K562 (cell line): ENCODE measurements at regions of chr6 and their contacts with region 1.

Region 1: DNA sequence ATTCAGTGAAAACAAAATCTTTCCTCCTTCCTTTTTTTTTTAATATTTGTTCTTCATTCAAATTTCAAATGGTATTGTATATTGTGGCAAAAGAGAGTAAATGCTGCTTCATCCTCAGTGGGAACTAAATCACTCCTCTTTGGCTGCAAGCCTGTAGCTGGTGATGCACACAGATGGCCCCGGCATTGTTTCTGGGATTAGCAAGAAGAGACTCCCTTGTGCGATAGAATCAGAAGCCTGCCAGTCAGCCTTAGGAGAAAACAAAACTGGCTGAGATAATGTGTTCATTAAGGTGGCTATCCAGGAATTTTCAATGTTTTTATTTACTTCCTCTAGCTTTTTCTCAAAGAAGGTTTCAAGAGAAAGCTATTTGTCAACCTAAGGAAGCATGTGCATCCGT is 20.7 kb upstream of the ELOVL2 start:
- DNase-seq: no peak
- ATAC-seq: no peak
- H3K4me3 ChIP-seq: no peak overlapping the region
- H3K27ac ChIP-seq: no peak overlapping the region
- H3K4me1 ChIP-seq: peaks cover 3% of the 10 kb centered on the region in 2 experiments; a peak in 3 of 5 replicates
- H3K27me3 ChIP-seq: peaks cover 0 to 2% of the 10 kb centered on the region in 2 experiments; a peak in 1 of 5 replicates
- CTCF ChIP-seq: no peak
- EP300 ChIP-seq: no peak
- POLR2A ChIP-seq: no peak
- RAD21 ChIP-seq: no peak

Region 2: DNA sequence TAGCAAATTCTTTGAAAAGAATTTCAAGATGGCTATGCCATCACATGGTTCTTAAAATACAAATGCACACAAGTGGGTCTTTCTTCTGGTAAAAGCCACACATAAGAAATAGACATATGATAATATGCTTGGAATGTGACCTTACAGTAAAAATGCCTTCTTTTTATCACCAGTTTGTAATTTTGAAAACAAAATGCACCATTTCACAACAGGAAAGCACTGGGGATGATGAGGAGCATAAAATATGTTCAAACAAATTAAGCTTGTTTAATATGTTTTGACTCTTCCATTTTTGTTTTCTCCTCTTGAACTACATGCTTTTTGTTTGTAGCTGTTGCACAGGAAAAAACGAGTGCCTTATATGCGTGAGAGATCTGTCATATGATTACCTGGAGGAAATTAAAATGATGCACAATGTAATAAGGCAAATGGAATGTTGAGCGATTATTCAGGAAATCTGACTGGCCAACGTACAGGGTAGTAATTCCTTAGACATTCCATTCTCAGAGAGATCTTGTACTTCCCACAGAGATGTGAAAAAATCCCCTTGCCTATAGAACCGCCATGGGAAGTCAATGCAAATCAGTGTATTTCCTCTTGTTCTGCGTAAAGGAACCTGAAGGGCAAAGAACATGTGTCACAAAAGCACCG is 1561.6 kb before region 1 on chr6:
- CTCF ChIA-PET with region 1: no interaction called
- POLR2A ChIA-PET with region 1: no interaction called
- in situ Hi-C with region 1: no loop called
- intact Hi-C with region 1: no loop called
- DNase-seq: no peak
- ATAC-seq: no peak
- H3K4me3 ChIP-seq: no peak overlapping the region
- H3K27ac ChIP-seq: no peak overlapping the region
- H3K4me1 ChIP-seq: no peaks in the 10 kb centered on the region
- H3K27me3 ChIP-seq: no peaks in the 10 kb centered on the region
- CTCF ChIP-seq: no peak
- EP300 ChIP-seq: no peak
- POLR2A ChIP-seq: no peak
- RAD21 ChIP-seq: no peak

Region 3: DNA sequence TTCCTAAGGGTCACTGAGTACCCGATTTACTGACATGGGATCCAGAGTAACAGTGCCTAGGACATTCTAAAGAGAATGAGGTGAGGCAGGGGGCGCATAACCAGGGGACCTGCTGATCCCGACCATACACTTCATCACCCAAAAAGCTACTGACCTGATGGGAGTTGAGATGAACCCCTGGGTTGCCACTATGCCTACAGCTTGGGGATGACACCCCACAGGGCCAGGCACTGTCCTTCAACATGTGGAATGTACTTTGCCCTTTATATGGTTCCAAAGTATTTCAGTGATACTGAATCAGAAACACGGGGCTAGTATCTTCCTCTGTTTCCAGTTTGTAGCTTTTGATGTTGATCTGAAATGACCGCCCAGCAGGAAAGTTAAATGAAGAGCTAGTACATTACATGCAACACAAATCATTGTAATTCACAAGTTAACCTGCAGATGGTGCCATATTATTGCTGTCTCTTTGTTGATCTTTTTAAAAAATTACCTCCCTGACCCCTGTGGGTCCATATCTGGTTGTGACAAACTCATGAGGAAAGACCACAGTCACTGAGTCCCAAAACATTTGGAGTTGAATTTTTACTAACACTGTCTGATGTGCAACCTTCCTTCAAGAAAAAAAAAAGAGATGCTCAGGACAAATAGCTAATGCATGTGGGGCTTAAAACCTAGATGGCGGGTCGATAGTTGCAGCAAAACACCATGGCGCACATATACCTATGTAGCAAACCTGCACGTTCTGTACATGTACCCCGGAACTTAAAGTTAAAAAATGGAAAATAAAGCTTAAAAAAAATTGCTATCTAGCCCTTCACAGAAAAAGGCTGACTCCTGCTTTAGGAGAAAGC is 586.4 kb before region 1 on chr6:
- CTCF ChIA-PET with region 1: interaction called, 13 read pairs
- POLR2A ChIA-PET with region 1: interaction called, 3 read pairs
- in situ Hi-C with region 1: loop called (anchors 5 kb)
- intact Hi-C with region 1: loop called (anchors 1 kb)
- DNase-seq: peak; percentile 59 to 79 (median 68)
- ATAC-seq: peak; percentile 88
- H3K4me3 ChIP-seq: no peak overlapping the region
- H3K27ac ChIP-seq: no peak overlapping the region
- H3K4me1 ChIP-seq: peaks cover 0 to 6% of the 10 kb centered on the region in 2 experiments; a peak in 1 of 5 replicates
- H3K27me3 ChIP-seq: peaks cover 0 to 15% of the 10 kb centered on the region in 2 experiments; a peak in 2 of 5 replicates
- CTCF ChIP-seq: peak; percentile 57 to 86 (median 71); a peak in 5 of 6 replicates
- EP300 ChIP-seq: no peak
- POLR2A ChIP-seq: no peak
- RAD21 ChIP-seq: peak; percentile 82 to 92

Region 4: DNA sequence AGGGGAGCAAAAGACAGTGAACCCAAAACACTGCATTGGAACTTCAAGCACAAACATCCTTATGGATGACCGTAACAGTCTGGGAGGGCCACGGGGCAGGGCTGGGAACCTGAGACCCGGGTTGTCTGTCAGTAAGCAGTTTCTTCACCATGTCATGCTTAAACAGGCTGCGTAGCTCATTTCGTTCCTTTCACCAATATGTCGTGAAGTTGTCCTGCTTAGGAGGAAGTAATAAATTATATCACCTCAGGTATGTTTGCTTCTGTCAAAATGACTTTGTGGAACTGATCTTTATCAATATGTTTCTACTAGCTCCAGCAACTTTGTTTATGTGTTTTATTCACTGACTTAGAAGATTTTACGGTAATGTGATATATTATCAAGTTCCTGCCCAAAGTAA is 214.1 kb before region 1 on chr6:
- CTCF ChIA-PET with region 1: interaction called, 4 read pairs
- POLR2A ChIA-PET with region 1: no interaction called
- in situ Hi-C with region 1: no loop called
- intact Hi-C with region 1: loop called (anchors 2 kb)
- DNase-seq: peak in 2 of 4 experiments; percentile 51 to 57
- ATAC-seq: peak; percentile 86
- H3K4me3 ChIP-seq: no peak overlapping the region
- H3K27ac ChIP-seq: peak overlapping the region; percentile 53
- H3K4me1 ChIP-seq: peaks cover 8 to 11% of the 10 kb centered on the region in 2 experiments; a peak in 3 of 5 replicates
- H3K27me3 ChIP-seq: no peaks in the 10 kb centered on the region
- CTCF ChIP-seq: no peak
- EP300 ChIP-seq: peak; percentile 54; the same call in 1 of the 2 replicates
- POLR2A ChIP-seq: no peak
- RAD21 ChIP-seq: no peak